Lower leg skin (tissue), 4 donors: ENCODE measurements at regions of chrX and their contacts with region 1.

Region 1: GRCh38 chrX:129925305-129926092 is 19.5 kb downstream of the UTP14A start:
- DNase-seq: peak in 1 of 2 donors; percentile 49
- H3K4me3 ChIP-seq: no peak overlapping the region
- CTCF ChIP-seq: no peak
- POLR2A ChIP-seq: no peak

Region 2: DNA sequence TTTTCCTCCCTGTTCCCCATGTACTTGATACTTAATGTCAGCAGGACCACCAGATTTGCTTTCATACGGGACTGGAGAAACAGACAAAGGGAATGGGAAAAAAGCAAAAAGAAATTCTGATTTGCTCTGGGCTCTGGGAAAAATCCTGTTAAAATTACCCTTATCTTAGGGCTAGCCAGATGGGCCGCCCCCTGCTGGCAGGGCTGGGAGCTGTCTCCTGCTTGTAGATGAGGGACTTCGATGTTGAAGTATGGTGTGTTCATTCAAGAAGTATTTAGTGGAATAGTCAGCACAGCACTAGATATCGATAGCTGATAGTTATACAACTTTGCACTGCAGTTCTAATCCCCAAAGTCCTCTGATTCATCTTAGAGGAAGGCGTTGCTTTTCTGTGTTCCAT is 102.7 kb after region 1 on chrX:
- intact Hi-C with region 1: loop called (anchors 5 kb)
- DNase-seq: peak in 1 of 2 donors; percentile 15
- H3K4me3 ChIP-seq: no peak overlapping the region
- CTCF ChIP-seq: no peak
- POLR2A ChIP-seq: no peak

Region 3: DNA sequence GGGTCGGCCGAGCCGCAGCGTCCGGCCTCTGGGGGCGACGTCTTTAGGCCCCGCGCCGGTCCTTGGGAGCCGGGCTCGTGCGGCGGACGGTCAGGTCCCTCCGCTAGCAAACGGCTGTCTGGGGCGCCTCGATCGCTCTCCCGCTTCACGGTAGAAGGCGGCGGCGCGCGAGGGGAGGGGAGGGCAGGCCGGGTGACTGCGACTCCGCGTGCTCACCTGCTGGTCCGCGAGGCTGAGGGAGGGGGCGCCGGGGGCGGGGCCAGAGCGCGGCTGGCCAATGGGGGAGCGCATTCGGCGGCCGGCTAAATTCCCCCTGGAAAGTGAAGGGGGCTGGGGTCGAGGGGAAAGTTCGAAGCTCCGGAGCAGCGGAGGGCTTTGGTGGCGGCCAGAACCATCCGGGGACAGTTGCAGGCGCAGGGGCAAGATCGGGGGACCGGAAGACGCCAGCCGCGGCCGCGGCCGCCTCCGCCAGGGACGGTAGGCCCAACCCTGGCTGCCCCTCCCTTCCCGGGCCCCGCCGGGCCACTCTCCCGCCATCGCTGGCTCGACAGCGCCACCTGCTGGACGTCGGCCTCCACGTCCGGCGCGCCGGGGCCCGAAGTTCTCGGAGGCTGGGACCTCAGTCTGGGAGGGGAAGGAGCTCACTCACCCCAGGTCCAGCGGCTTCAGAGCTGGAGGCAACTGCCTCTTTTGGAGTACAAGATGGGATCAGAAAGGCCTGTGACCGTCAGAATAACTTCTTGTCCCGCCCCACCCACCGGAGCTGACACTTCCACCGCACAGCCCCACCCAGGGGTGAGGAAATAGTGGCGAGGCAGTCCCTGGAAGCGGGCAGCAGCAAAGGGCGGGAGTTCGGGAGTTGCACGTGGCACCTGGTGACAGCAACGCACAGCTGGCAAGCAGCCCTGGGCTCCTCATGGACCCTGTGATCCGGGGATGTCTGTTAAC is 134.9 kb after region 1 on chrX:
- intact Hi-C with region 1: no loop called
- DNase-seq: peak; percentile 53 to 95
- H3K4me3 ChIP-seq: peak overlapping the region; percentile 15
- CTCF ChIP-seq: peak in 1 of 3 donors; percentile 69
- POLR2A ChIP-seq: no peak